ENCODE measurements at regions of chr3 and their contacts with region 1.

Region 1: GRCh38 chr3:41961750-41962679 is at the start of gene ULK4:
- DNase-seq: peak; percentile 98
- H3K4me3 Mint-ChIP-seq: peak within 1 kb of the TSS; percentile 90
- H3K27ac Mint-ChIP-seq: peak within 1 kb of the TSS; percentile 80
- H3K4me1 Mint-ChIP-seq: peaks cover 17% of the 10 kb centered on the region
- H3K27me3 Mint-ChIP-seq: peaks cover under 1% of the 10 kb centered on the region
- total RNA-seq, gene ULK4: 9.5 to 10.8 TPM

Region 2: DNA sequence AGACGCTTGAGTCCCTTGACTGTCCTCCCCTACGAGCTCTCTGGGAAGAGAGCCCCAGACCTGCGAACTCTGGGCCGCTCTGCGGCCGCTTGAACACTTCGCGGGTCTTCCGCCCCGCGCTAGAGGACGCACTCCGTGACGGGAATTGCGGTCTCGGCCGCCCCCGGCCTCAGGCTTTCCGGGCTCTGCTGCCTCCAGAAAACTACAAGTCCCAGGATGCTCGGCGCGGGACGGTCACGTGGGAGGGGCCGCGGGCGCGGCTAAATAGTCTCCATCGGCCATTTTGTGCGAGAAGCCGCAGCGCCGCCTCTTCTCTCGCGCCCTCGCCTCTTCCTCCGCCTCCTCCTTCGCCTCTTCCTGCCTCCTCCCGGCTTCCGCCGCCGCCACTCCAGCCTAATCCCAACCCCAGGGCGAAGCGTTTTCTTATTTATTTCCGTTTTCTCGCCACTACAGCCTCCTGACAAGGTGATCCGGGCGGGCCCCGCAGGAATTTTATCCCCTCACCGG is 1652.5 kb before region 1 on chr3 and contains the start of gene EIF1B:
- CTCF ChIA-PET with region 1: no interaction called
- POLR2A ChIA-PET with region 1: no interaction called
- intact Hi-C with region 1: loop called (anchors 5 kb)
- DNase-seq: peak; percentile 99
- H3K4me3 Mint-ChIP-seq: peak within 1 kb of the TSS; percentile 96
- H3K27ac Mint-ChIP-seq: peak within 1 kb of the TSS; percentile 97
- H3K4me1 Mint-ChIP-seq: peaks cover 23% of the 10 kb centered on the region
- H3K27me3 Mint-ChIP-seq: no peaks in the 10 kb centered on the region
- total RNA-seq, gene EIF1B: 48.6 to 51.0 TPM

Region 3: DNA sequence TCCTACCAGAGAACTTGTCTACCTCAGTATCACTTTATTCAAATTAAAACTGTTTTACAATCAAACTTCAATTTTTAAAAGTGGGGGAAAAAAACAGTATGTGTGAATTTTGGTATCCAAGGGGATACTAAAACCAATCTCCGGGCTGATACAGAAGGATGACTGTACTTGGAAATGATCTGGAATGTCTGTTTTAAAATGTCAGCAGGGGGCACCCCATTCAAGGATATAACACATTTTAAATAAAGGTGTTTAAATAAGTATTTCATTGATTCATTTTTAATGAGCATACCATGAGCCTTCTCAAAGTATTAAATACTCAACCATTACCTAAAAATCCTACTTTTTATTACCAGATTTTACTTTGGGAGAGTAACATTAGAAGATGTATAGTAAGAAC is 68.0 kb before region 1 on chr3:
- CTCF ChIA-PET with region 1: no interaction called
- POLR2A ChIA-PET with region 1: no interaction called
- intact Hi-C with region 1: no loop called
- DNase-seq: no peak
- H3K4me3 Mint-ChIP-seq: no peak overlapping the region
- H3K27ac Mint-ChIP-seq: no peak overlapping the region
- H3K4me1 Mint-ChIP-seq: no peaks in the 10 kb centered on the region
- H3K27me3 Mint-ChIP-seq: no peaks in the 10 kb centered on the region

Region 4: DNA sequence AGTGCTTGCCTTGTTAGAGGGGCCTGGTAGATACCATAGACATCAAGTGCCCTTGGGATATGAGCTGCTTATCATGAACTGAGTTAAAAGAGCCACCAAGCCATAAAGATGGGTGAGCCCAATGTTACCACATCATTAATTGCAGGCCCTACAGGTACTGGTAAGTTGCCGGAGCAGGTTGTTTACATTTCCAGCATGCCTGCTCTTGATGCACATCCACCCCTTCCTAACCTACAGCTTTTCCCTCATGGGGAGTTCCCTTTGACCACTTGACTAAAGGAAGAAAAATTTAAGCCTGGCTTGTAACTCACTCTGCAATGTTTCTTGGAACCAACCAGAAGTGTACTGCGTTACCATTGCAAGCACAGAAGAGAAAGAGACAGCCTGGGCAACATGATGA is 24.5 kb after region 1 on chr3:
- CTCF ChIA-PET with region 1: no interaction called
- POLR2A ChIA-PET with region 1: no interaction called
- intact Hi-C with region 1: no loop called
- DNase-seq: no peak
- H3K4me3 Mint-ChIP-seq: no peak overlapping the region
- H3K27ac Mint-ChIP-seq: no peak overlapping the region
- H3K4me1 Mint-ChIP-seq: no peaks in the 10 kb centered on the region
- H3K27me3 Mint-ChIP-seq: no peaks in the 10 kb centered on the region

Region 5: GRCh38 chr3:42080452-42080891 is 118.5 kb after region 1 on chr3:
- CTCF ChIA-PET with region 1: no interaction called
- POLR2A ChIA-PET with region 1: no interaction called
- intact Hi-C with region 1: loop called (anchors 2 kb)
- DNase-seq: peak; percentile 51
- H3K4me3 Mint-ChIP-seq: no peak overlapping the region
- H3K27ac Mint-ChIP-seq: peak overlapping the region; percentile 80
- H3K4me1 Mint-ChIP-seq: peaks cover 59% of the 10 kb centered on the region
- H3K27me3 Mint-ChIP-seq: no peaks in the 10 kb centered on the region

Measured in activated CD4-positive, alpha-beta memory T cell treated with anti-CD3 and anti-CD28 coated beads for 36 hours (primary cell).